ENCODE measurements at regions of chr12 and their contacts with region 1.

Region 1: DNA sequence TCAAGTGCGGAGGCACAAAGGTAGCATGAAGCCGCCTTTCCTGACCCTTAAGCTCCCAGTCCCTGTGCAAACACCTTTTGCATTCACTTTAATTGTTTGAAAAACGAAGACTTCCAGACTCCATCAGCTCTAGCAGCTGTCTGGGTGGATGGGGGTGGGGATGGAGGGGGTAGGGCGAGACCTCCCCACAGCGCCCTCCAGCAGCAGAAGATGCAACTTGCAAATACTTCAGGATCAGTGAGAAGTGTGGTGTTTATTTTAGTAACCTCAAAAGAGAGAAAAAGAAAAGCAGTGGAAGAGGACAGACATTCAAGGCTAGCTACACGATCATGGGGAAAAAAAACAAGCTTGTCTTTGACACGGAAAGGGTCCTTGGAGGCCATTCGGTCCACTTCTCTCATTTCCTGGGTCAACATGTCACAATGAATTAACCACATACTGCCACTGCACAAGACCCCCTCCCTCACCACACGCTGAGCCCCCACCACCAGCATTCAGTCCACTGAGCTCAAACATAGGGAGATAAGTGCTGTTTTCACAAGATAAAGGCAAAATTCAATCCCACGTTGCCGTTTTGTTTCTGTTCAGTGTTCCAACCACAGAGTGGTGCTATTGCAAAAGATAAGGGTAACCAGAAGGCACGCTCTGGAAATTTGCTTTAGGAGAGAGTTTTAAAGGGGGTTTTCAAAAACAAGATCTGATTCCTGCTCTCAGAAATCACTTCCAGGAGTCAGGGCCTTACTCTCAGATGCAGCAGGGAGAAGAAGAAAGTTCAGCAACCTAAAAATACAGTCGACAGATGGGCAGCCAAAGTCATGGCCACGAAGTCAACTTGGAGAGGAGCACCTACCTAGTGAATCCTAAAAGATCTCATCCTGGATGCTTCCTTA is 3.3 kb upstream of the NTF3 start:
- DNase-seq: no peak
- H3K4me3 ChIP-seq: no peak overlapping the region
- H3K27ac ChIP-seq: no peak overlapping the region
- H3K4me1 ChIP-seq: peaks cover 12 to 28% (median 18%) of the 10 kb centered on the region in 4 donors
- H3K27me3 ChIP-seq: peaks cover 60% of the 10 kb centered on the region
- CTCF ChIP-seq: peak; percentile 27 to 55 (median 45)
- EP300 ChIP-seq: no peak
- POLR2A ChIP-seq: no peak

Region 2: GRCh38 chr12:5200278-5201087 is 228.1 kb before region 1 on chr12:
- in situ Hi-C with region 1: loop called in 3 of 4 experiments (anchors 10 to 25 kb)
- intact Hi-C with region 1: no loop called
- DNase-seq: peak; percentile 46
- H3K4me3 ChIP-seq: no peak overlapping the region
- H3K27ac ChIP-seq: no peak overlapping the region
- H3K4me1 ChIP-seq: no peaks in the 10 kb centered on the region
- H3K27me3 ChIP-seq: no peaks in the 10 kb centered on the region
- CTCF ChIP-seq: peak; percentile 56 to 68 (median 66)
- EP300 ChIP-seq: no peak
- POLR2A ChIP-seq: no peak